ENCODE measurements at regions of chr7 and their contacts with region 1.

Region 1: DNA sequence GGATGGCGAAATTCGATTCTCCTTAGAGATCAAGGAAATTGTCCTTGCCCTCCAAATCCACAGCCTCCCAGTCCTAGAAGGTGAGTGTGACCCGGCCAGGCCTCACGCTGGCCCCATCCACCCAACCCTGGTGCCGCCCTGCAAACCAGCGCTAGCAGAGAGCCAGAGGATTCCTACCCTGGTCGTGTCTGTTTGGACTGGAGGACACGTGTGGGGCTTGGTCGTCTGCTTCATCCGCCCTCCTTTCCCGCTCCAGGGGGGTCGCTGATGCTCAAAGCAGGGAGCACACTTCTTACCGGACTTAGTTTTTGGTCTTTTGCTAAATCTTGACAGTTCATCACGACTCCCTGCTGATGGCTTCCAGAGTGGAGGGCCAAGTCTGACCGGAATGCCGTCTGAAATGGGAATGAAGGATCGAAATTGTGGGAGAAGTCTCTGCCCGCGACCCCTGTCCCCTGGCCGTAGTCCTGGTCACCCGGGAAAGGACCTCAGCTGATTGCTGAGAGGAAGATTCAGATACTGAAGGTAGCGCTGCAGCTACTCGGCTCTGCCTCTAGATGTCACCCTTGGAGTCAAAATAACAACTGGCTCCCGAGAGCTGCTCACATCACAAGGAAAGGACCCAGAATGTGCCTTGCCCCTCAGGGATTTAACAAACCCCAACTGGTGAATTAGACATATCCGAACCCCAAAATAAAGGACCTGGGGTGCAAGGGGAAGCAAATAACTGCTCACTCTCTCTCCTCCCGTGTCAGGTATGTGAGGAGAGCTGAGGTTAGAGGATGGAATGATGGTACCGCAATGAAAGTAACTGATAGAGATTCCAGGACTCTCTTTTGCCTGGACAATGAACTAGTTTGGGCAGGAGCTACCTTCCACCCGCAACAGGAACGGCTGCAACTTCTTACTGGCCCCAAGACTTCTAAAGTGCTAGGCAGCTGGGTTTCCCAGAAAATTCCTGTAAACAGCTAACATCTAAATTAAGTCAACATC is 23.5 kb upstream of the ORC5 start:
- DNase-seq: no peak
- H3K4me3 ChIP-seq: no peak overlapping the region
- H3K27ac ChIP-seq: no peak overlapping the region
- H3K4me1 ChIP-seq: peaks cover 0 to 6% (median 0%) of the 10 kb centered on the region in 3 donors
- H3K27me3 ChIP-seq: peaks cover 0 to 12% (median 0%) of the 10 kb centered on the region in 4 donors
- CTCF ChIP-seq: peak; percentile 44 to 69 (median 58)
- POLR2A ChIP-seq: no peak

Region 2: DNA sequence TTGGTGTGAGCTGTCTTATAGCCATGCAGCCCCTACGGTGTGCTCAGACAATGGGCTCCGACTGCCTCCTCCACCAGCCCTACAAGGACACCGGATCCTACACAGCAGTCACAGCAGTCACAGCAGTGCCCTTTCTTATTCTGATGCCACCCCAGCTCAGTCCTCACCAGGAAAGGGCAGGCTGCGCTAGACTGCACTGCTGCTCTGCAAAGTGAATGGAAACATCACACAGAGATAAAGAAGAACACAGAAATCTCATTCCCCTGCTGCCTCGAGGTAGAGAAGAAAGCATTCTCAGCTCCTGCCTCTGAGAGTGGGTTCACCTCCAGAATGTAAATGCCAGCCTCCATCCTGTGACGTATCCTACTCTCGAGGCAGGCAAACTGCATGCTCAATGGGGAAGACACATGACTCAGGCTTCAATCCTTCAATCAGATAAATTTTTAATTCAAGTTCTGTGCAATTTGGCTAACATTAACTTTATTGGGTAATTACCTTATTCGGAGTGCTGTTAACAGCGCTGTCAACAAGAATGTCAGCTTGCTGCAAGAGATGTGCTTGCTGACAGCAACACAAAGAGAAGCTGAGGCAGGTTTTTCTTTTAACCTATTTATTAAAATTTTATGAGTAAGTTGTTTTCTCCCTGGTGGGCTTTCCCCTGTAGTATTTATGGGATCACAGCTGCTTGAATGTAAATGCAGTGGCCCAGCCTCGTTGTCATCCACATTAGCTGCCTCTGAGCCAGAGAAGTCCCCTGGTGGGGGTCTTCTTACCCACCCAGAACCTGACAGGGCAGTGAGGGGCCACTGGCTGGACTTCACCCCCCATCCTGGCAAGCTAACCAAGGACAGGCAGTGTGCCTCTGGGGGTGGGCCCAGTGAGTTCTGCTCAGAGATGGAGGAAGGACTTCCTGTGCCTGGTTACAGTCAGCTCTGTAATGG is 541.3 kb after region 1 on chr7:
- intact Hi-C with region 1: no loop called
- DNase-seq: no peak
- H3K4me3 ChIP-seq: no peak overlapping the region
- H3K27ac ChIP-seq: no peak overlapping the region
- H3K4me1 ChIP-seq: no peaks in the 10 kb centered on the region
- H3K27me3 ChIP-seq: peaks cover 0 to 4% (median 0%) of the 10 kb centered on the region in 4 donors
- CTCF ChIP-seq: no peak
- POLR2A ChIP-seq: no peak

Region 3: DNA sequence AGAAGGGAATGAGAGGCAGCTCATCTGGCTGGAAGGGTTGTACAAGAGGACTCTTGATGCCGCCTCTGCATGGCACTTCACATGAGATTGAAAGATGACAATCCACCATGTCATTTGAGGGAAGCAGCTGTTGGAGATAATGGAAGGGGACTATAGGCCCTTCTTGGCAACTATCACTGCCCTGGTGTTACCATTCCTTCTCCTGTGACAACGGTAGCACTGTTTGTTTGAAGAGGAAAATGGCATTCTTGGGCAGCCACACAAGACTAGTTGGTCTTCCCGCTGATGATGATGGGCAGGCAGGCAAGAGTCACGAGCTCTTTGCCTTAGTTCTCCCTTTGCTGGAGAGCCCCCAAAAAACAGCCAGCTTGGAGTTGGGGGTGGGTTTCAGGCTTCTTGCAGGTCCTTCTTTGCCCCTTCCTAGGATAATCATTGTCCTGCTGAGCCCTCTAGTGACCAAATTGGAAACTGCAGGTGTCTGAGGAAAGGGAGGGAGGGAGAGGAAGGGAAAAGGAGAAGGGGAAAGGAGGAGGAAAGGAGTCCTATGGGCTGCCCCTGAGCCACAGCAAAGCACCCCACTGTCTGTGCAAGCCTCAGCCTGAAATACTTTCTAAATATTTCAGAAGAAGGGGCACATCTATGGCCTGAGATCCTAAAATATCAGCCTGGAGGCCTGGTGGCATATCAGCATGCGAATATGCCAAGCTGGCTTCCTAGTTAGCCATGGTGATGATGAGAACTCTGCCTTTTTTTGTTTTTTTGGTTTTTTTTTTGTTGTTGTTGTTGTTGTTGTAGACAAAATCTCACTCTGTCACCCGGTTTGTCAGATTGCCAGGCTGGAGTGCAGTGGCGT is 617.0 kb after region 1 on chr7:
- intact Hi-C with region 1: loop called (anchors 10 kb)
- DNase-seq: no peak
- H3K4me3 ChIP-seq: no peak overlapping the region
- H3K27ac ChIP-seq: no peak overlapping the region
- H3K4me1 ChIP-seq: no peaks in the 10 kb centered on the region
- H3K27me3 ChIP-seq: peaks cover 0 to 32% (median 0%) of the 10 kb centered on the region in 4 donors
- CTCF ChIP-seq: peak; percentile 63 to 84 (median 70)
- POLR2A ChIP-seq: no peak

Measured in esophagus squamous epithelium (tissue), 5 donors.